Heart left ventricle (tissue), 16 donors: ENCODE measurements at regions of chr9 and their contacts with region 1.

Region 1: GRCh38 chr9:21317956-21318923 is 13.1 kb upstream of the IFNA5 start:
- DNase-seq: peak in 1 of 5 donors; percentile 10
- ATAC-seq: peak in 3 of 4 donors; percentile 70 to 83 (median 74)
- H3K4me3 ChIP-seq: no peak overlapping the region
- H3K27ac ChIP-seq: no peak overlapping the region
- H3K4me1 ChIP-seq: peaks cover 0 to 8% (median 0%) of the 10 kb centered on the region in 12 donors
- H3K27me3 ChIP-seq: no peaks in the 10 kb centered on the region
- CTCF ChIP-seq: peak; percentile 43 to 81 (median 64)
- POLR2A ChIP-seq: no peak

Region 2: DNA sequence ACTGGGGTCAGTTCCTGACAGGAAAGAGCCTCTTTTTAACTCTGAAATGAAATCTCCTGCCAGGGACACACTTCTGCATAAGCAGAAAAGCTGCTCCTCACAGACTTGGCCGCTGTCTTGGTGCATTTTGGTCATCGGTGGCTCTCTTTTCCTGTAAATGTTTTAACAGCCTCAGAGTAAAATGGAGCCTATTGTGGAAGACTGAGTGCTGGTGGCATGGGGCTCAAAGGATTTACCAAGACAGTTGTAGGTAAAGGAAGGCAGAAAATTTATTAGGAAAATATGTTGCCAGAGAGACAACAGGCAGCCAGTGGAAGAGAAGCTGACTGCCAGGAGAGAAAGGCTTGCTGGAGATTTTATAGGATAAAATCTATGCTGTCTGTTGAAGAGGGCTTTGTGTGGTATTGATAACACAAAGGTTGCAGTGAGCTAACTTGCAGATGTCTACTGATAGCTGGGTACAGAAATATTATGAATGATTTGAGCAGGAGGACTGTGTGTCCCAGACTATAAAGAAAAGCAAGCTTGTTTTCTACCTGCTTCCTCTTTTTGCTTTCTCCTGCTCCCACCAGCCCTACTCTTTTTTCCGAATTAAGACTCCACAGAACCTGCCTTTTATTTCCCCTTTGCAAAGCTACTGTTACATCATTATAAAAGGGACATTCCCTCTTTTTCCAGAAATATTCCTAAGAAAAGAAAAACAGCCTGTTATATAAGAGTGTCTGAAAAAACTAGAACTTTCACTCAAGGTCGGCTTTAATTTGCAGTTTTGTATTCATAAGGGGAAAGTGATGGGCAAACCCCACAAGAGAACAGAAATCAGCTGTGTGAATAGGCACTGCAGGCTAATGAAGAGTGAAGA is 50.5 kb before region 1 on chr9:
- intact Hi-C with region 1: no loop called
- DNase-seq: no peak
- ATAC-seq: no peak
- H3K4me3 ChIP-seq: no peak overlapping the region
- H3K27ac ChIP-seq: no peak overlapping the region
- H3K4me1 ChIP-seq: no peaks in the 10 kb centered on the region
- H3K27me3 ChIP-seq: peaks cover 0 to 18% (median 0%) of the 10 kb centered on the region in 9 donors
- CTCF ChIP-seq: no peak
- POLR2A ChIP-seq: no peak

Region 3: GRCh38 chr9:21395778-21396717 is 77.8 kb after region 1 on chr9:
- intact Hi-C with region 1: loop called in 2 of 10 experiments (anchors 5 kb)
- DNase-seq: peak; percentile 30 to 76 (median 52)
- ATAC-seq: peak in 3 of 4 donors; percentile 65 to 78 (median 69)
- H3K4me3 ChIP-seq: peak overlapping the region in 11 of 12 donors; percentile 35 to 59 (median 51)
- H3K27ac ChIP-seq: no peak overlapping the region
- H3K4me1 ChIP-seq: peaks cover 0 to 12% (median 0%) of the 10 kb centered on the region in 12 donors
- H3K27me3 ChIP-seq: peaks cover 0 to 86% (median 37%) of the 10 kb centered on the region in 9 donors
- CTCF ChIP-seq: peak; percentile 66 to 87 (median 78)
- POLR2A ChIP-seq: no peak

Region 4: DNA sequence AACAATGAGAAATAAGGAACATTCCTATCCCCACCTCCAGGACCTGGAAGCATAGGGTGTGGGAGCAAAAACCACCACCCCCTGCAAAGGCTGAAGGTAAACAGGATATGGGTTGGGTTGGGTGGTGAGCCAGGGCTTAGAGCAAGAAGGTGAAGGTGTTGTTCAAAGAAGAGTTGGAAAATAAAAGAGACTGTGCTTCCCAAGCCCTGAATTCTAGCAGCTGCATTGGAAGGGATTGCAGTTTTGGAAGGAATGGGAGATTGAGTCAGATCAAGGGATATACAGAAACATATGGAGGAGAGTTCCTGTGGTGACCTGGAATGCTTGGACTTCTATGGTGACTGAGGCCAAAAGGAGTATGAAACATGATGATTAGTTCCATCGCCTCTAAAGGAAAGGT is 459.5 kb after region 1 on chr9:
- intact Hi-C with region 1: no loop called
- DNase-seq: no peak
- ATAC-seq: no peak
- H3K4me3 ChIP-seq: no peak overlapping the region
- H3K27ac ChIP-seq: no peak overlapping the region
- H3K4me1 ChIP-seq: peaks cover 0 to 10% (median 0%) of the 10 kb centered on the region in 12 donors
- H3K27me3 ChIP-seq: peaks cover 0 to 10% (median 0%) of the 10 kb centered on the region in 9 donors
- CTCF ChIP-seq: no peak
- POLR2A ChIP-seq: no peak